ENCODE measurements at regions of chr2 and their contacts with region 1.

Region 1: GRCh38 chr2:127049927-127050802 is 56.8 kb downstream of the BIN1 start:
- DNase-seq: peak; percentile 24
- ATAC-seq: peak; percentile 86
- H3K4me3 ChIP-seq: peak overlapping the region in 1 of 3 experiments; percentile 27; a peak in 1 of 6 replicates
- H3K27ac ChIP-seq: no peak overlapping the region
- H3K4me1 ChIP-seq: peaks cover 12% of the 10 kb centered on the region
- H3K27me3 ChIP-seq: peaks cover 0 to 5% of the 10 kb centered on the region in 2 experiments; a peak in 2 of 5 replicates
- CTCF ChIP-seq: peak; percentile 99
- EP300 ChIP-seq: no peak
- POLR2A ChIP-seq: no peak
- RAD21 ChIP-seq: peak; percentile 96

Region 2: DNA sequence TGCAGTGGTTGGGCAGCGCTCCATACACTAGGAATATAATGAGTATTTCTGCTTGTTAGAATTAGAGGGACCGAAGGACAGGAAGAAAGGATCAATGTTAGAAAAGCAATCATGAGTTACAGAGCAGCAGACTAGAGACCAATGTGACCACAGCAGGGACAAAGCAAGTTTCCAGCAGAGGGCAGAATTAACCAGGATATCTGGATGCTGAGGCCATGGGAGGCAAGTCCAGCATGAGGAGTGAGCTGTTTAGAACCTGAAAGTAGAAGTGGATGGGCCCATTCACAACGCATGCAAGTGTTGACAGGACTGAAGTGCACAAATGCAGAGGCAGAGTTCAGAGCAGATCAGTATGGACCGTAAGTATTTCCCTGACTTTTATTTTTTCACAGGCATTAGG is 1304.7 kb before region 1 on chr2:
- CTCF ChIA-PET with region 1: no interaction called
- POLR2A ChIA-PET with region 1: no interaction called
- in situ Hi-C with region 1: no loop called
- intact Hi-C with region 1: loop called (anchors 10 kb)
- DNase-seq: peak; percentile 49
- ATAC-seq: peak; percentile 94
- H3K4me3 ChIP-seq: no peak overlapping the region
- H3K27ac ChIP-seq: no peak overlapping the region
- H3K4me1 ChIP-seq: no peaks in the 10 kb centered on the region
- H3K27me3 ChIP-seq: no peaks in the 10 kb centered on the region
- CTCF ChIP-seq: peak; percentile 70
- EP300 ChIP-seq: no peak
- POLR2A ChIP-seq: no peak
- RAD21 ChIP-seq: no peak

Region 3: GRCh38 chr2:126527836-126528507 is 522.2 kb before region 1 on chr2:
- CTCF ChIA-PET with region 1: interaction called, 10 read pairs
- POLR2A ChIA-PET with region 1: no interaction called
- in situ Hi-C with region 1: no loop called
- intact Hi-C with region 1: loop called (anchors 2 kb)
- DNase-seq: peak; percentile 50
- ATAC-seq: peak; percentile 96
- H3K4me3 ChIP-seq: no peak overlapping the region
- H3K27ac ChIP-seq: no peak overlapping the region
- H3K4me1 ChIP-seq: no peaks in the 10 kb centered on the region
- H3K27me3 ChIP-seq: no peaks in the 10 kb centered on the region
- CTCF ChIP-seq: peak; percentile 61
- EP300 ChIP-seq: no peak
- POLR2A ChIP-seq: no peak
- RAD21 ChIP-seq: peak; percentile 74

Region 4: GRCh38 chr2:126793885-126794613 is 256.1 kb before region 1 on chr2:
- CTCF ChIA-PET with region 1: no interaction called
- POLR2A ChIA-PET with region 1: no interaction called
- in situ Hi-C with region 1: loop called (anchors 10 kb)
- intact Hi-C with region 1: no loop called
- DNase-seq: no peak
- ATAC-seq: peak; percentile 83
- H3K4me3 ChIP-seq: no peak overlapping the region
- H3K27ac ChIP-seq: no peak overlapping the region
- H3K4me1 ChIP-seq: no peaks in the 10 kb centered on the region
- H3K27me3 ChIP-seq: peaks cover 1 to 59% of the 10 kb centered on the region in 2 experiments; a peak in 4 of 5 replicates
- CTCF ChIP-seq: peak; percentile 63
- EP300 ChIP-seq: no peak
- POLR2A ChIP-seq: no peak
- RAD21 ChIP-seq: no peak

Region 5: DNA sequence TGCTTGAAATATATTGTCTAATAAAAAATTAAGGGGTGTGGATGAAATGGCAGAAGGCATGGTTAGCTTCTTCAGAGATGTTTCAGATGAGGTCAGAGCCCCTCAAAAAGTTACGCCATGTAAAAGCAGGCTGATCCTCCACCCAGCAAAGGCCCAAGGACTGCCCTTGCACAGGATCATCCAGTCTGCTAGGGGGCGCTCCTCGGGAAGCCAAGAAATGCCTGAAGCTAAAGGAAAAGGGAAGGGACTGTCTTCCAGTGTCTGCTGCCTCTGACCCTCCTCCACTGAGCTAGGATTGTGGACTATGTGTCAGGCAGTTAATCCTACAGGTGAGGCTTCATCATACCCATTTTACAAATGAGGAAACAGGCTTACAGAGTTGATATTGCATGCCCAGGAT is 185.3 kb before region 1 on chr2:
- CTCF ChIA-PET with region 1: interaction called, 3 read pairs
- POLR2A ChIA-PET with region 1: no interaction called
- in situ Hi-C with region 1: no loop called
- intact Hi-C with region 1: loop called (anchors 10 kb)
- DNase-seq: no peak
- ATAC-seq: peak; percentile 67
- H3K4me3 ChIP-seq: no peak overlapping the region
- H3K27ac ChIP-seq: no peak overlapping the region
- H3K4me1 ChIP-seq: no peaks in the 10 kb centered on the region
- H3K27me3 ChIP-seq: peaks cover 0 to 11% of the 10 kb centered on the region in 2 experiments; a peak in 1 of 5 replicates
- CTCF ChIP-seq: peak; percentile 52
- EP300 ChIP-seq: no peak
- POLR2A ChIP-seq: no peak
- RAD21 ChIP-seq: no peak

Region 6: DNA sequence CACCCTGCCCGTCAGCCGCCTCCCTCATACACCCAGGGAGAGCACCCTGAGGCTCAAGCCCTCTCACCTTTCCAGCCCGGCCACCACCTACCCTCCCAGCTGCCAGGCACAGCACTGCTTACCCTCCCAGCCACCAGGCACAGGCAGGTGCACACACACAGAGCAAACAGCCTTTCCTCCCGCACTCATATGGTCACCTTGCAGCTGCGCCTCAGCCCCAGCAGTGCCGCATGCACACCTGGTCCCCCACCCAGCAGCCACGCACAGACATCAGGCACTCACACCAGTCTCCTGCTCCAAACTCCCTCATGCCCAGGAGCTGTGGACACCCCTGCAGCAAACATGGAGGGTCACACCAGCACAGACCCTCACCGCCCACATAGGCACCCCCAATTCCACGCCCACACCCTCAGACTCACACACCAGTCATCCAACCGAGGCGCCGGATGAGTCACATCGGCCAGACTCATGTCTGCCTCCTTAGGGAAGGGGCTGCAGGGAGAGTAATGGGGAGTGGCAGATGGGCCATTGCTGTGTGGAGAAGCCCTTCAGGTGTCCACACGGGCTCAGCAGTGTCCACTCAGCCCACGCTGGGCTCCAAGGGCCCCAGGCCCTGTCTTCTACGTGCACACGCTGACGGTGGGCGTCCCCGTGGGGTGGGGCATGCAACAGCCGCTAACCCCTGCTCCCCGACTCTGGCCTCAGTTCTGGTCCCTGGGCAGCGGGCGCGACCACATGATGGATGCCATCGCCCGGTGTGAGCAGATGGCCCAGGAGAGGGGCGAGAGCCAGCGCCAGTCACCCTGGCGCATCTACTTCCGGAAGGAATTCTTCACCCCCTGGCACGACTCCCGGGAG is 573.5 kb after region 1 on chr2:
- CTCF ChIA-PET with region 1: no interaction called
- POLR2A ChIA-PET with region 1: no interaction called
- in situ Hi-C with region 1: no loop called
- intact Hi-C with region 1: no loop called
- DNase-seq: no peak
- ATAC-seq: no peak
- H3K4me3 ChIP-seq: no peak overlapping the region
- H3K27ac ChIP-seq: no peak overlapping the region
- H3K4me1 ChIP-seq: no peaks in the 10 kb centered on the region
- H3K27me3 ChIP-seq: peaks cover 31 to 87% of the 10 kb centered on the region in 2 experiments
- CTCF ChIP-seq: no peak
- EP300 ChIP-seq: no peak
- POLR2A ChIP-seq: no peak
- RAD21 ChIP-seq: no peak

Measured in HepG2 (cell line).